Gastrocnemius medialis (tissue), 4 donors: ENCODE measurements at regions of chr19 and their contacts with region 1.

Region 1: DNA sequence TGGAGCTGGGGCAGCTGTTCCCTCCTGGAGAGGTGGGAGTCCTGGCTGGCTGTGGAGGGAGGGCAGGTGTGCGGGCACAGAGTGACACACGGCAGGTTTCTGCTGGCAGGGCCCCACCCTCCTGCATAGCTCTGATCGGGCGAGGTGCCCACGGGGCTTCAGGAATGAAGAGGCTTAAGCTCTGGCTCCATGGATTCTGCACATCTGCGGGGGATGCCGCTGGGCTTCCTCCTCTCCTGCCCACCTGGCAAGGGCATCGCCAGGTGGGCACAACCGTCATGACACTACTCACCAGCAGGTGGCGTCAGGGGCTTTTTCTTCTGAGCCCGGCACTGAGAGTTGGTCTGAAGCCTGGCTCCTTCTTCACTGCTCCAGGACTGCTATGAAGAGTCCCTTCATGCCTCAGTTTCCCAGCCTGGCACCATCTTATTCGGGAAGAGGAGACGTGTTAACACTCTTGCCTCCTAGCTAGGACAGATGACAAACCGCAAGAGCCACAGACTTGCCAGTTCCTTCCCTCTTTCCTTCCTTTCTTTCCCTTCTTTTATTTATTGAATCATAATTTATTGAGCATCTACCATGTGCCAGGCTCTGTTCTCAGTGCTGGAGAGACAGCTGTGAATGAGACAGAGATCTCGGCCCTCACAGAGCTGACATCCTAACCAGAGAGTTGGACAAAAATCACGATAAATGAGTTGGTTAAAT is 15.2 kb upstream of the PAK4 start:
- DNase-seq: peak in 1 of 2 donors; percentile 46
- ATAC-seq: peak; percentile 77
- H3K4me3 ChIP-seq: no peak overlapping the region
- H3K27ac ChIP-seq: no peak overlapping the region
- H3K4me1 ChIP-seq: no peaks in the 10 kb centered on the region
- H3K27me3 ChIP-seq: peaks cover 14 to 20% (median 18%) of the 10 kb centered on the region in 3 donors
- CTCF ChIP-seq: peak; percentile 41 to 76 (median 71)
- POLR2A ChIP-seq: no peak

Region 2: GRCh38 chr19:38805180-38805579 is 305.2 kb before region 1 on chr19:
- in situ Hi-C with region 1: no loop called
- intact Hi-C with region 1: no loop called
- DNase-seq: no peak
- ATAC-seq: no peak
- H3K4me3 ChIP-seq: no peak overlapping the region
- H3K27ac ChIP-seq: no peak overlapping the region
- H3K4me1 ChIP-seq: no peaks in the 10 kb centered on the region
- H3K27me3 ChIP-seq: no peaks in the 10 kb centered on the region
- CTCF ChIP-seq: no peak
- POLR2A ChIP-seq: no peak

Region 3: GRCh38 chr19:39187559-39187957 is 77.1 kb after region 1 on chr19:
- in situ Hi-C with region 1: loop called in 1 of 4 experiments (anchors 5 kb)
- intact Hi-C with region 1: no loop called
- DNase-seq: no peak
- ATAC-seq: no peak
- H3K4me3 ChIP-seq: no peak overlapping the region
- H3K27ac ChIP-seq: no peak overlapping the region
- H3K4me1 ChIP-seq: no peaks in the 10 kb centered on the region
- H3K27me3 ChIP-seq: peaks cover 0 to 10% (median 0%) of the 10 kb centered on the region in 3 donors
- CTCF ChIP-seq: no peak
- POLR2A ChIP-seq: no peak

Region 4: DNA sequence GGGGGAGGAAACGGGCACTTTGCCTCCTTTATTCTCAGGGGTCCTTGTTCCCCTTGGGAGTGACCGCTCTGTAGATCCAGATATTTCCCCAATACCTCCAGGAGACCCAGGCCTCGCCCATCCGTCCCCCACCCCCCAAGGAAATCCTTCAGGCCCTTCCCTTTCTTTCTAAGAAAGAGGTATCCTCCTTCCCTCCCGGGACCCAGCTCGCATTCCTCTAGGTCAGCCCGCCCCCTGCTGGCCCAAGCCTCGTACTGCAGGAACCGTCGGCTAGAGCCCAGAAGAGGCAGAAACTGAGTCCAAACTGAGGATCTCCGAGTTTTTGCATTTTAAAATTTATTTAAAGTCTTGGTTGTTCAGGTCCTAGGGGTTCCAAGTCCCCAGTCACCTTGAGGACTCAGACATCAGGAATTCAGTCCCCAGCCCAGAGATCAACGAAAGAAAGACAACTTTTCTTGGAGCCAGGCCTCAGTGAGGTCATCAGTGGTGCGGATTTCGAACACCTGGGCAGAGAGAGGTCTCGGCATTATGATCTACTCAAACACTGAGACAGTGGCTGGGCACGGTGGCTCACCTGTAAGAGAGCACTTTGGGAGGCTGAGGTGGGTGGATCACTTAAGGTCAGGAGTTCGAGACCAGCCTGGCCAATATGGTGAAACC is 217.8 kb after region 1 on chr19:
- in situ Hi-C with region 1: loop called in 2 of 4 experiments (anchors 5 kb)
- intact Hi-C with region 1: loop called (anchors 1 kb)
- DNase-seq: peak; percentile 54 to 70
- ATAC-seq: peak; percentile 72 to 77
- H3K4me3 ChIP-seq: no peak overlapping the region
- H3K27ac ChIP-seq: no peak overlapping the region
- H3K4me1 ChIP-seq: peaks cover 0 to 3% of the 10 kb centered on the region in 2 donors
- H3K27me3 ChIP-seq: peaks cover 0 to 4% (median 0%) of the 10 kb centered on the region in 3 donors
- CTCF ChIP-seq: peak; percentile 73 to 97 (median 90)
- POLR2A ChIP-seq: no peak